Caco-2 (cell line): ENCODE measurements at regions of chr5 and their contacts with region 1.

Region 1: DNA sequence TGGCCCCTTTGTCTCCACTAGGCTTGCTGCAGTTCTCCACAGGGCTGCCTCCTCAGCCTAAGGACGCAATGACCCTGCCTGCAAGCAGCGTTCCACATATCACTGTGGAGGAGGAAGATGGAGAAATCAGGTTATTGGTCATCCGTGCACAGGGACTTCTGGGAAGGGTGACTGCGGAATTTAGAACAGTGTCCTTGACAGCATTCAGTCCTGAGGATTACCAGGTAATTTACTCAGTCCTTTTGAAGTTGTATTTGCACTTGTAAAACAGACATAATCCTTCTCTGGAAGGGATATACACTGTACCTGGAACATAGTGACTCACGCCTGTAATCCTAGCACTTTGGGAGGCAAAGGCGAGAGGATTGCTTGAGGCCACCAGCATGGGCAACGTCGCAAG is 116.6 kb downstream of the ADGRV1 start:
- DNase-seq: peak; percentile 73 to 79
- H3K4me3 ChIP-seq: no peak overlapping the region
- H3K4me3 Mint-ChIP-seq: peak overlapping the region; percentile 60
- H3K27ac Mint-ChIP-seq: no peak overlapping the region
- H3K4me1 ChIP-seq: peaks cover 9% of the 10 kb centered on the region
- H3K4me1 Mint-ChIP-seq: peaks cover 10% of the 10 kb centered on the region
- H3K27me3 ChIP-seq: no peaks in the 10 kb centered on the region
- H3K27me3 Mint-ChIP-seq: no peaks in the 10 kb centered on the region
- CTCF ChIP-seq: no peak

Region 2: GRCh38 chr5:90645024-90645610 is 30.1 kb before region 1 on chr5:
- CTCF ChIA-PET with region 1: no interaction called
- POLR2A ChIA-PET with region 1: no interaction called
- intact Hi-C with region 1: loop called (anchors 1 kb)
- DNase-seq: peak; percentile 20 to 47
- H3K4me3 ChIP-seq: no peak overlapping the region
- H3K4me3 Mint-ChIP-seq: no peak overlapping the region
- H3K27ac Mint-ChIP-seq: no peak overlapping the region
- H3K4me1 ChIP-seq: no peaks in the 10 kb centered on the region
- H3K4me1 Mint-ChIP-seq: no peaks in the 10 kb centered on the region
- H3K27me3 ChIP-seq: no peaks in the 10 kb centered on the region
- H3K27me3 Mint-ChIP-seq: no peaks in the 10 kb centered on the region
- CTCF ChIP-seq: no peak

Region 3: GRCh38 chr5:90741022-90741563 is 65.9 kb after region 1 on chr5:
- CTCF ChIA-PET with region 1: no interaction called
- POLR2A ChIA-PET with region 1: no interaction called
- intact Hi-C with region 1: loop called (anchors 1 kb)
- DNase-seq: peak; percentile 47 to 57
- H3K4me3 ChIP-seq: no peak overlapping the region
- H3K4me3 Mint-ChIP-seq: peak overlapping the region; percentile 8
- H3K27ac Mint-ChIP-seq: peak overlapping the region; percentile 20
- H3K4me1 ChIP-seq: no peaks in the 10 kb centered on the region
- H3K4me1 Mint-ChIP-seq: peaks cover 8% of the 10 kb centered on the region
- H3K27me3 ChIP-seq: no peaks in the 10 kb centered on the region
- H3K27me3 Mint-ChIP-seq: peaks cover 5% of the 10 kb centered on the region
- CTCF ChIP-seq: no peak

Region 4: DNA sequence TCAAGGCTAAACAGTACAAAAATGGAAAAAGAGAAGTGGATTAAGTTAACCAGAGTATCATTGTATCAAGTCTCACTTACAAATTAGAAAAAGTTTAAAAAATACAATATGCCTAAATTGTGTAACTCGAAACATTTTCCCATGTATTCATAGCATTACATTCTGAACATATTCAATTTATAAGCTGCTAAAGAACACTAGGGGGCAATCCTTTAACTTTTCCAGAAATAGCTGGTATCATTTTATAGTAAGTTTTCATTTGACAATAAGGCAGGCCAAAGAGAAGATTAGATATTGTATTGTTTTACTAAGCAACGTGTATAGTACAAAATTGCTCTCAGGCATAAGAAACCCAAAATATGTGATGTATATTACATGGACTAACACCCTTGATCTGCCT is 118.0 kb after region 1 on chr5:
- CTCF ChIA-PET with region 1: no interaction called
- POLR2A ChIA-PET with region 1: no interaction called
- intact Hi-C with region 1: no loop called
- DNase-seq: no peak
- H3K4me3 ChIP-seq: no peak overlapping the region
- H3K4me3 Mint-ChIP-seq: no peak overlapping the region
- H3K27ac Mint-ChIP-seq: no peak overlapping the region
- H3K4me1 ChIP-seq: no peaks in the 10 kb centered on the region; the same call in 1 of the 2 replicates
- H3K4me1 Mint-ChIP-seq: no peaks in the 10 kb centered on the region
- H3K27me3 ChIP-seq: no peaks in the 10 kb centered on the region
- H3K27me3 Mint-ChIP-seq: no peaks in the 10 kb centered on the region
- CTCF ChIP-seq: no peak